Activated T-helper 1 cell treated with anti-CD3 and anti-CD28 coated beads, Interleukin-12 subunit alpha, Interleukin-12 subunit beta, Interleukin-2, Interleukin-4 antibody, amounts not matched to agents 30 ng/mL and 10 ng/mL and 1 ng/mL, durations not matched to agents 14 hours and 24 hours and 36 hours (primary cell): ENCODE measurements at regions of chr17 and their contacts with region 1.

Region 1: GRCh38 chr17:49180303-49180702 is 30.1 kb downstream of the GNGT2 start:
- DNase-seq: peak; percentile 32
- H3K4me3 Mint-ChIP-seq: no peak overlapping the region
- H3K27ac Mint-ChIP-seq: no peak overlapping the region
- H3K4me1 Mint-ChIP-seq: peaks cover 5% of the 10 kb centered on the region
- H3K27me3 Mint-ChIP-seq: peaks cover 8% of the 10 kb centered on the region

Region 2: DNA sequence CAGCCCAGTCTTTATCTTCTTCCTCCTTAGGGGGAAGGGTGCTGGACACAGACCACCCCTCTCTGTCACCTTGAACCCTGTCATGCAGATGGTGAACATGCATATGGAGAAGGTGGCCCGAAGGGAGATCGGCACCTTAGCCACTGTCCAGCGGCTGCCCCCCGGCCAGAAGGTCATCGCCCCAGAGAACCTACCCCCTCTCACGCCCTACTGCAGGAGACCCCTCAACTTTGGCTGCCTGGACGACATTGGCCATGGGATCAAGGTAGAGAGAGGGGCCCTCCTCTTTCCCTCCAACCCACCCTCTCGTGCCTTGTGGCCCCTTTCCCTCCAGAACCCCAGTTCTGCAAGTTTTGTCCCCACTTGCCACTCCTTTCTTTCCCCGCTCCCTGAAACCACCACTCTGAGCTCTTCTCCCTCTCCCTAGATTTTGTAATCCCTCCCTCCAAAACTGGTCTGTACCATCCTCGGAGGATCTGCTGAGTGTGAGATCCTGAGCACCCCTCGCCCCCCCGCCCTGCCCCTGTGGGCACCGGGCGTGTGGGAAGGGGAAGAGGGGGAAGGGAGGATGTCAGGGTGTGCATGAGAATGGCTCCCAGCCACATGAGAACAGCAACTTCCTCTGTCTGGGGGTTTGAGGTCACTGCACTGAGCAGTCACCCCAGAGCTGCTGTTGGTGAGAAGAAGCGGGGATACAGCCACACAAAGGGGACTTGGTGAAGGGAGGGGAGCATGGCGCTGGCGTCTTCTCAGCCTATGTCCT is 37.5 kb after region 1 on chr17:
- intact Hi-C with region 1: loop called (anchors 2 kb)
- DNase-seq: peak; percentile 65
- H3K4me3 Mint-ChIP-seq: peak overlapping the region; percentile 82
- H3K27ac Mint-ChIP-seq: peak overlapping the region; percentile 82
- H3K4me1 Mint-ChIP-seq: peaks cover 72% of the 10 kb centered on the region
- H3K27me3 Mint-ChIP-seq: no peaks in the 10 kb centered on the region

Region 3: DNA sequence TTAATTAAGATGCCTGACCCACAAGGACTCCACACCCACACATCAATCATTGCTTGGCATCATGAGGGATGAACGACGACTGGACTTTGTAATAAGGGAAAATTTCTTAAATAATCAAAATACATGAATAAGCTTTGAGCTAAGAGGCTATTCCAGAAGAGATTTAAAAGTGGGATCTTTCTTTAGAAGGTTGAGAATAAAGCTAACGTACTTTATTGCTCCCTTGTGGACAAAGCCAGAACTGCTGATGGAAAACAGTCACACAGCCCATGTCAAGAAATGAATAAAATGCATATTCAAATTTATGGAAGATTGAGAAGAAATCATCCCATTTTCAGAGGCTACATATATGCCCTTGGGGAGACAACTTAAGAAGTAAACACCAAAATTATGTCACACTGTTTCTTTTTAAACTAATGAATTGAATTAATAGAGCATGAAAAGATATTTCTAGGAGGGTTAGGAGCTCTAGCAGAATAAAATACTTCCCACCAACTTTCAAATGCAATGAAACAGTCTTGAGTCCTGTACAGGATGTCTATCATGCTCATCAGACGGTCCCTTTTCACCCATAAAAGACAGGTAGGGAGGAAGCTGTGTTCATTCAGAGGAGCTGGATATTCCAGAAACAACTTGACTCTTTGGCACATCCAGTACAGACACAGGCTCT is 110.5 kb after region 1 on chr17:
- intact Hi-C with region 1: loop called (anchors 1 kb)
- DNase-seq: no peak
- H3K4me3 Mint-ChIP-seq: no peak overlapping the region
- H3K27ac Mint-ChIP-seq: no peak overlapping the region
- H3K4me1 Mint-ChIP-seq: no peaks in the 10 kb centered on the region
- H3K27me3 Mint-ChIP-seq: no peaks in the 10 kb centered on the region

Region 4: GRCh38 chr17:49456183-49456965 is 276.1 kb after region 1 on chr17:
- intact Hi-C with region 1: no loop called
- DNase-seq: no peak
- H3K4me3 Mint-ChIP-seq: no peak overlapping the region
- H3K27ac Mint-ChIP-seq: no peak overlapping the region
- H3K4me1 Mint-ChIP-seq: no peaks in the 10 kb centered on the region
- H3K27me3 Mint-ChIP-seq: peaks cover 50% of the 10 kb centered on the region